Vagina (tissue), 2 donors: ENCODE measurements at regions of chr6 and their contacts with region 1.

Region 1: GRCh38 chr6:76490456-76490855 is 418.0 kb upstream of the IMPG1 start:
- DNase-seq: no peak
- H3K4me3 ChIP-seq: no peak overlapping the region
- H3K27ac ChIP-seq: no peak overlapping the region
- H3K4me1 ChIP-seq: no peaks in the 10 kb centered on the region
- H3K27me3 ChIP-seq: no peaks in the 10 kb centered on the region
- CTCF ChIP-seq: no peak
- POLR2A ChIP-seq: no peak

Region 2: DNA sequence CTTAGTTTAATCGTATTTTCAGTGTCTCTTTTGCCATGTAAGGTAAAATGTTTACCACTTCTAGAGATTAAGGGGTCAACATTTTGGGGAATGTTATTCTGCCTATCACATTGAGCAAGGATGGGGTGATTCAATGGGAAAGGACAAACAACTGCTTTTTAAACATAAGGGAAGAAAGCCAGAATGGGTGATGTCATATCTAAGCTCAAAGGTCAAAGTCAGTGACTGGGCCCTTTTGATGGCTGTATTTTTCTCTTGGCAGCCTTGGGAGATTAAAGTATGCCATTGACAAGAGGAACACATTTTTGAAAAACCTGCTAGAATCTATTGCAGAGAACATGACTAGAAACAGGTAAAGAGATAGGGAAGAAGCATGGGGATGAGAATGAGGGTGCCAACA is 1899.6 kb after region 1 on chr6:
- intact Hi-C with region 1: loop called (anchors 5 kb)
- DNase-seq: no peak
- H3K4me3 ChIP-seq: no peak overlapping the region
- H3K27ac ChIP-seq: no peak overlapping the region
- H3K4me1 ChIP-seq: no peaks in the 10 kb centered on the region
- H3K27me3 ChIP-seq: no peaks in the 10 kb centered on the region
- CTCF ChIP-seq: no peak
- POLR2A ChIP-seq: no peak